MCF 10A (cell line): ENCODE measurements at regions of chr4 and their contacts with region 1.

Region 1: GRCh38 chr4:152996108-152996571 is 60.0 kb downstream of the FHDC1 start:
- DNase-seq: no peak
- H3K4me3 Mint-ChIP-seq: no peak overlapping the region
- H3K27ac Mint-ChIP-seq: peak overlapping the region; percentile 9
- H3K4me1 Mint-ChIP-seq: peaks cover 18% of the 10 kb centered on the region
- H3K27me3 Mint-ChIP-seq: no peaks in the 10 kb centered on the region
- CTCF ChIP-seq: no peak

Region 2: GRCh38 chr4:152747444-152747843 is 248.7 kb before region 1 on chr4:
- CTCF ChIA-PET with region 1: no interaction called
- POLR2A ChIA-PET with region 1: no interaction called
- intact Hi-C with region 1: no loop called
- DNase-seq: peak; percentile 20
- H3K4me3 Mint-ChIP-seq: no peak overlapping the region
- H3K27ac Mint-ChIP-seq: no peak overlapping the region
- H3K4me1 Mint-ChIP-seq: peaks cover 5% of the 10 kb centered on the region
- H3K27me3 Mint-ChIP-seq: no peaks in the 10 kb centered on the region
- CTCF ChIP-seq: no peak

Region 3: DNA sequence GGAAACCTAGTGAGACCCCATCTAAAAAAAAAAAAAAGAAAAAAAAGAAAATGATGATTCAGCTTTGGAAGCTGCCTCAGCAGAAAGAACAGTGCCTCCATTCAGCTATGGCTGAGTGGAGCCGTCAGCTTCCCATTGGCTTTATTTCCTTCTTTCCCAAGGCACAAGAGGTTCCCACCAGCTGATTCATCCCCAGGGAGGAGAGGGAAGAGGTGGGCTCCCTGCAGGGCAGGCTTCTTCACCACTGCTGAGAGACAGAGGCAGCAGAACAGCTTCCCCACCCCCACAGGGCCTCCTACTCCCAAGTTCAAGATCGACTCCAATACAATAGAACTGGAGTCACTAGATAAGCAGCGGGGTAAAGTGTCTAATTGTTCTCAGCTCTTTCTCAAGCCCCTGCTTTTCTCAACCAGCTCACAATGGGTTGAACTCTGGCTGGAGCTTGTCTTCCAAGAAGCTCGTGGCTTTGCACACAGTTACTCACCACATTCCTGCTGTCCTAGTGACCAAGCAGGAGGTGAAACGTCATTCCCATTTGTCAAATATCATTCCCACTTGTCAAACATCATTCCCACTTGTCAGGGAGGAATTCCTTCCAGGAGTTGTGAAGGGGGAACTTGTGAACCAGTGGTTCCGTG is 12.2 kb before region 1 on chr4:
- CTCF ChIA-PET with region 1: interaction called, 4 read pairs
- POLR2A ChIA-PET with region 1: interaction called, 14 read pairs
- intact Hi-C with region 1: no loop called
- DNase-seq: peak; percentile 58
- H3K4me3 Mint-ChIP-seq: no peak overlapping the region
- H3K27ac Mint-ChIP-seq: no peak overlapping the region
- H3K4me1 Mint-ChIP-seq: peaks cover 19% of the 10 kb centered on the region
- H3K27me3 Mint-ChIP-seq: no peaks in the 10 kb centered on the region
- CTCF ChIP-seq: no peak